ENCODE measurements at regions of chrX and their contacts with region 1.

Region 1: DNA sequence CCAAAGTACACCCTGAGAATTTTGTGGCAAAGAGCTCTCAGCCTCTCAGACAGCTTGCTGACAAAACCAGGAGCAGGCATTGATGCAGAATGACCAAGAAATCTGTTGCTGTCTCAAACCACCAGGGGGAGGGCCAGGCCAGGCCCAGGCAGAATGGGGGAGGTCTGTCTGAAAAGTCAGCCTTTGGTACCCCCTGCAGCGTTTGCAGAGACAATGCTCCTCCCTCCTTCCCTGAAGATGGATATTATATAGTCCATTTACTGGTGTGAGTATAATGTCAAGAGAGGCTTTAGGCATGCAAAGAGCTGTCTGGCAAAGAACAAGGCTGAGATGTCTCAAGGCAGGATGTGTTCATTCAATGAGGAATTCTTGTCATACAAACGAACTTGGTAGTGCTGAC is 52.9 kb upstream of the TRPC5OS start:
- DNase-seq: peak; percentile 68
- ATAC-seq: peak; percentile 88
- H3K4me3 Mint-ChIP-seq: no peak overlapping the region
- H3K27ac Mint-ChIP-seq: no peak overlapping the region
- H3K4me1 Mint-ChIP-seq: peaks cover 25% of the 10 kb centered on the region
- H3K27me3 Mint-ChIP-seq: no peaks in the 10 kb centered on the region; the same call in 1 of the 2 replicates
- CTCF ChIP-seq: peak; percentile 57; the same call in 1 of the 2 replicates

Region 2: GRCh38 chrX:111680988-111681779 is 141.9 kb before region 1 on chrX and contains the start of gene ALG13:
- CTCF ChIA-PET with region 1: no interaction called
- POLR2A ChIA-PET with region 1: no interaction called
- DNase-seq: peak; percentile 79
- ATAC-seq: peak; percentile 91
- H3K4me3 Mint-ChIP-seq: peak within 1 kb of the TSS; percentile 83
- H3K27ac Mint-ChIP-seq: peak within 1 kb of the TSS; percentile 78
- H3K4me1 Mint-ChIP-seq: peaks cover 16% of the 10 kb centered on the region
- H3K27me3 Mint-ChIP-seq: no peaks in the 10 kb centered on the region
- CTCF ChIP-seq: peak; percentile 65
- total RNA-seq, gene ALG13: 36.2 to 51.0 TPM (median 48.5 TPM) in 3 replicates

Region 3: DNA sequence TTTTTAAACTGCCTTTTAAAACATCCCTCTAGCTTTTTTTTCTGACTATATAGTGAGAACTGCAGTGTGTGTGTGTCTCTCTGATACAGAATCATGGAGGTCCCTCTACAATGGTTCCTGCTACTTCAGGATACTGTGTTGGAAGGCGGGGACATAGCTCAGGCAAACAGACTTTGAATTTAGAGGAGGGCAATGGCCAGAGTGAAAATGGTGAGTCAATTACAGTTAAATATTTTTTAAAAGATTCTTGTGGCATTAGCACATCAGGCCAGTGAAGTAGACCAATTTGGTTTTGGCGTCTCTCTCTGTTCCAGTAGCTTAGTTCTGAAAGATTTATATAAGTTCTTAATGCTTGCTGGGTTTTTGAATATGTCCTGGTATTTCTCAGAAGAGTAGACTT is 95.0 kb before region 1 on chrX:
- CTCF ChIA-PET with region 1: no interaction called
- POLR2A ChIA-PET with region 1: no interaction called
- DNase-seq: no peak
- ATAC-seq: no peak
- H3K4me3 Mint-ChIP-seq: no peak overlapping the region
- H3K27ac Mint-ChIP-seq: no peak overlapping the region
- H3K4me1 Mint-ChIP-seq: no peaks in the 10 kb centered on the region
- H3K27me3 Mint-ChIP-seq: no peaks in the 10 kb centered on the region
- CTCF ChIP-seq: no peak

Region 4: GRCh38 chrX:111869639-111870034 is 46.5 kb after region 1 on chrX:
- CTCF ChIA-PET with region 1: interaction called, 28 read pairs
- POLR2A ChIA-PET with region 1: no interaction called
- DNase-seq: peak; percentile 19
- ATAC-seq: peak; percentile 96
- H3K4me3 Mint-ChIP-seq: no peak overlapping the region
- H3K27ac Mint-ChIP-seq: peak overlapping the region; percentile 16; the same call in 1 of the 2 replicates
- H3K4me1 Mint-ChIP-seq: peaks cover 16% of the 10 kb centered on the region
- H3K27me3 Mint-ChIP-seq: no peaks in the 10 kb centered on the region; the same call in 1 of the 2 replicates
- CTCF ChIP-seq: peak; percentile 46

Region 5: GRCh38 chrX:112043997-112044396 is 220.9 kb after region 1 on chrX:
- CTCF ChIA-PET with region 1: interaction called, 10 read pairs
- POLR2A ChIA-PET with region 1: no interaction called
- DNase-seq: no peak
- ATAC-seq: no peak
- H3K4me3 Mint-ChIP-seq: no peak overlapping the region
- H3K27ac Mint-ChIP-seq: no peak overlapping the region
- H3K4me1 Mint-ChIP-seq: peaks cover 19% of the 10 kb centered on the region
- H3K27me3 Mint-ChIP-seq: no peaks in the 10 kb centered on the region; the same call in 1 of the 2 replicates
- CTCF ChIP-seq: peak; percentile 18; the same call in 1 of the 2 replicates

Measured in WTC11 (cell line).